ENCODE measurements at regions of chr12 and their contacts with region 1.

Region 1: DNA sequence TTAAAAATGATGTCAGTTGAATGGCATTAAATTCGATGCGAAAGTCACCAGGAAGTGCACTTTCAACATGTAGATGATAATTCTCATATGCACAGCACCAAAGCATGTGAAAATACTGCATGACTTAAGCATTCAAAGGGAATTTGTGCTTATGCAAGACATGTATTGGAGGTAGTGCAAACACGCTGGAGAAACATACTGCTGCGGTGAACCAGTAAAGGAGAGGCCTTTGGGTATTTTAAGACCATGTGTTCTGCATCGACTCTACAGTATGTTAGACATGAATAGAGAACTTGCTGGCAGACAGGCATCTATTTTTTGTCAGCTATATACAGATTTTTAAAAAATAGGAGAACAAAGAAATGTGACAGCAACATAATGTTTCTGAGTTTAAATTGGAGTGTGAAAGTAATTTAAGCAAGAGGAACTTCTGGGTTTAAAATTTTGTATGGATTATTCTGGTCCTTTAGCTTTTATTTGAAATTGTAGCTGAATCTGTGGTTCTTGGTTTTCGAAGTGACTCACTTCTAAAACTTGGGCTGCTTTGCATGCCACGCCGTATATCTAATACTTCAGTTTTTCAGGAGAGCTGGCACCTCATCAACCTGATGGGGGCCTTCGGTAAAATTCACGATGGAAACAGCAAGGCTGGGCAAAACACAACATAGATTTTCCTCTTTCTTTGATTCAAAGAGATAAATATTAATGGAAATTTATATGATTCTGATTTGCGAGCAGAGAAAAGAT is 408.7 kb downstream of the APAF1 start:
- DNase-seq: no peak
- ATAC-seq: no peak
- H3K4me3 ChIP-seq: no peak overlapping the region
- H3K27ac ChIP-seq: no peak overlapping the region
- H3K4me1 ChIP-seq: no peaks in the 10 kb centered on the region
- H3K27me3 ChIP-seq: no peaks in the 10 kb centered on the region
- CTCF ChIP-seq: no peak
- EP300 ChIP-seq: no peak
- POLR2A ChIP-seq: no peak
- RAD21 ChIP-seq: no peak

Region 2: GRCh38 chr12:97493731-97494130 is 1560.1 kb before region 1 on chr12:
- CTCF ChIA-PET with region 1: no interaction called
- POLR2A ChIA-PET with region 1: no interaction called
- in situ Hi-C with region 1: no loop called
- intact Hi-C with region 1: loop called (anchors 5 kb)
- DNase-seq: no peak
- ATAC-seq: no peak
- H3K4me3 ChIP-seq: no peak overlapping the region
- H3K27ac ChIP-seq: no peak overlapping the region
- H3K4me1 ChIP-seq: no peaks in the 10 kb centered on the region
- H3K27me3 ChIP-seq: no peaks in the 10 kb centered on the region
- CTCF ChIP-seq: no peak
- EP300 ChIP-seq: no peak
- POLR2A ChIP-seq: no peak
- RAD21 ChIP-seq: no peak

Measured in HepG2 (cell line).